ENCODE measurements at regions of chr9 and their contacts with region 1.

Region 1: DNA sequence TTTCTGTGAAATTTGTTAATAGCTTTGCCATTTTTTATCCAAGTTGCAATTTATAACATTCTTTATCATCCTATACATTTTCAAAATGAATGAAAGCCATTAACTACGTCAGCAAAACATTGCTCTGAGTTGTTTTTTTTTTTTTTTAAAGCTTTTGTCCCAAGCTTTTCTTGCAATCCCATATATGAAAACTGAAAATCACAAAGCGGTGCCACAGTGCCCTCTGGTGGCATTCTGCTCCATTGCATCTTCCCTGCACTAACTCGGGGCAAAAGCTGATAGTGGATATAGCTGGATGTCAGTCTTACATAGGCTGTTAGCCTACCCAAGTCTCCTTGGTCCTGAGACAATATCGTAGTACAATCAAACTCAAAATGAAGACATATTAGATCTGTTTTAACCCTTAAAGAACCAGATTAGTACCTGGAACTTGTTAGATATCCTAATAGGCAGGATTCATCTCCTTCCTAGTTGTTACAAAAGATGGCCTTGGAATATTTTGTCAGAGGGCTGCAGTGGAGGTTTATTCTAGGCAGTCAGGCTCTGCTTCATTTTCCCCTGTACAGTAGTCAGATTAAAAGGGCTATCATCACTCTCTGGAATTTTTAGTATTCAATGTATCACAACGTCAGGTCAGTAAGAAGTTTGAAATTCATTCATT is 669.9 kb downstream of the PTPRD start:
- DNase-seq: peak; percentile 65
- H3K4me3 Mint-ChIP-seq: no peak overlapping the region
- H3K27ac Mint-ChIP-seq: no peak overlapping the region
- H3K4me1 Mint-ChIP-seq: no peaks in the 10 kb centered on the region
- H3K27me3 Mint-ChIP-seq: peaks cover 51% of the 10 kb centered on the region
- CTCF ChIP-seq: peak; percentile 78

Region 2: DNA sequence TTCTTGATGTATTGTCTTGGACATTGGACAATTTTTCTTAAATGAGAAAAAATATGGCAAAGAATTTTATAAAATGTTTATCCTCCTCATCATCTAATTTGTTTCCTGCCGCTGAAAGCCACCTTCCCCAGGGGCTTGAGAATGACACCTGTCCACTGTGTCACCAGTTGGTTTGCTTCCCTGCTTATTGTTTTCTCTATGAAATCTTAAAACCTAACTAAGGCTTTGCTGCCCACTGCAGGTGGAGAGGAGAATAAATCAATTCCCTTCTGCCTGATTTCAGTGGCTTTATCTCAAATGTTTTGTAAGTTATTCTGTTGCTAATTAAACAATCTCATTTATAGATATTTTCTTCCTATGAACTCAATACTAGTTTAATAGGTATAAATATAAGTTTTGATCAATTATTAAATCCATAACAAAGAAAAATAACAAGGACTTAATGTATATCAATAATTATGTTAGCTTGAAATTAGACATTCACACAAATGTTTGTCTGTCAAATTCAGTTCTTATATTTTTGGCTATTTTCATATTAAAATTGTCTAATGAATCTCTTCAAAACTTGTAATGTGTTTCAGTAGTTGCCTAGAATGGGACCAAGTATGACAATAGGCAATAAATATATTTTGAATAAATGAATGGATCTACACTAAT is 152.6 kb before region 1 on chr9:
- CTCF ChIA-PET with region 1: interaction called, 3 read pairs
- POLR2A ChIA-PET with region 1: no interaction called
- intact Hi-C with region 1: loop called (anchors 2 kb)
- DNase-seq: peak; percentile 47
- H3K4me3 Mint-ChIP-seq: no peak overlapping the region
- H3K27ac Mint-ChIP-seq: no peak overlapping the region
- H3K4me1 Mint-ChIP-seq: no peaks in the 10 kb centered on the region
- H3K27me3 Mint-ChIP-seq: peaks cover 17% of the 10 kb centered on the region
- CTCF ChIP-seq: peak; percentile 54

Region 3: DNA sequence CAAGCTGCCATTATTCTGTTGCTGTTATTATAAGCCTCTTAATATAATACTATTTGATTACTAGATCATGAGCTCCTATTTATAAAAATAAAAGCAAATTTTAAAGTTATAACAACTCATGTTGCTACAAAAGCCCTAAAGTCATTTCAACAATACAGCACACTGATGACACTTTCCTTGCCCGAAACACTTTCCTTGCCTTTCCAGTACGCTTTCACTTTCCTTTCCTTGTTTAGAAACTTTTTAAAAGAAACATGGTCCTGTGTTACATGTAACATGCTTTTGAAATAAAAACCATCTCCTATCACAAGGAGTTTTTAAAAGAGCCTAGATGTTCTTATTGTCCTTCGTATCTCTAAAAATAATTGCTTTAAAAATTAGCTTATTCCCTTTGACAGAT is 18.5 kb before region 1 on chr9:
- CTCF ChIA-PET with region 1: interaction called, 15 read pairs
- POLR2A ChIA-PET with region 1: no interaction called
- intact Hi-C with region 1: no loop called
- DNase-seq: no peak
- H3K4me3 Mint-ChIP-seq: no peak overlapping the region
- H3K27ac Mint-ChIP-seq: no peak overlapping the region
- H3K4me1 Mint-ChIP-seq: no peaks in the 10 kb centered on the region
- H3K27me3 Mint-ChIP-seq: peaks cover 96% of the 10 kb centered on the region
- CTCF ChIP-seq: no peak

Region 4: GRCh38 chr9:9970514-9970913 is 27.6 kb after region 1 on chr9:
- CTCF ChIA-PET with region 1: interaction called, 16 read pairs
- POLR2A ChIA-PET with region 1: no interaction called
- intact Hi-C with region 1: no loop called
- DNase-seq: no peak
- H3K4me3 Mint-ChIP-seq: no peak overlapping the region
- H3K27ac Mint-ChIP-seq: no peak overlapping the region
- H3K4me1 Mint-ChIP-seq: no peaks in the 10 kb centered on the region
- H3K27me3 Mint-ChIP-seq: peaks cover 100% of the 10 kb centered on the region
- CTCF ChIP-seq: no peak